ENCODE measurements at regions of chr9 and their contacts with region 1.

Region 1: GRCh38 chr9:35079426-35080341 is at the start of gene FANCG:
- DNase-seq: peak; percentile 95
- H3K27ac ChIP-seq: peak within 1 kb of the TSS; percentile 91
- CTCF ChIP-seq: no peak

Region 2: GRCh38 chr9:35096035-35096849 is 16.6 kb after region 1 on chr9 and contains the start of gene PIGO:
- CTCF ChIA-PET with region 1: interaction called, 10 read pairs
- POLR2A ChIA-PET with region 1: interaction called, 5 read pairs
- DNase-seq: peak; percentile 87
- H3K27ac ChIP-seq: peak within 1 kb of the TSS; percentile 91
- CTCF ChIP-seq: peak; percentile 99

Region 3: DNA sequence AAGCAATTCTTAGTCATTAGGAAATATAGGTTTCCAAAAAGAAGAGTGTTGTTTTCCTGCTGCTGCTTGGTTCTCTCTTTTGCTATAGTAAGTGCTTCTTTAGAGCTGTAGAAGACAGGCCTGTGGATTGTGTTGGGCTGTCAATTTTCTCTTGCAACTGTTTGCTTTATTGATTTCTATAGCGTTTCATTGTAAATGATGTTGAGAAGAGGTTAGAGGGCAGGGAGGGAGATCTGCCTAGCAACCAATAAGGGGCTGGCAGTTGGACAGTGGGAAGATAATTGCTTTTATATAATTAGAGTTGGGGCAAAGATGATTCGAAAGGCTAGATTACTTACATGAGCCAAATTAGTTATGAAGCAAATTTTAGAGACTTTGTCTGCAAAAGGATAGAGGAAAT is 93.2 kb after region 1 on chr9:
- CTCF ChIA-PET with region 1: no interaction called
- POLR2A ChIA-PET with region 1: no interaction called
- DNase-seq: no peak
- H3K27ac ChIP-seq: no peak overlapping the region
- CTCF ChIP-seq: no peak